Lower leg skin (tissue), 4 donors: ENCODE measurements at regions of chr1 and their contacts with region 1.

Region 1: GRCh38 chr1:232950197-232951176 is at the start of gene NTPCR:
- DNase-seq: peak; percentile 89 to 98
- H3K4me3 ChIP-seq: peak within 1 kb of the TSS; percentile 91
- CTCF ChIP-seq: no peak
- POLR2A ChIP-seq: no peak
- total RNA-seq, gene NTPCR: 17.8 to 28.5 (median 21.8) TPM

Region 2: DNA sequence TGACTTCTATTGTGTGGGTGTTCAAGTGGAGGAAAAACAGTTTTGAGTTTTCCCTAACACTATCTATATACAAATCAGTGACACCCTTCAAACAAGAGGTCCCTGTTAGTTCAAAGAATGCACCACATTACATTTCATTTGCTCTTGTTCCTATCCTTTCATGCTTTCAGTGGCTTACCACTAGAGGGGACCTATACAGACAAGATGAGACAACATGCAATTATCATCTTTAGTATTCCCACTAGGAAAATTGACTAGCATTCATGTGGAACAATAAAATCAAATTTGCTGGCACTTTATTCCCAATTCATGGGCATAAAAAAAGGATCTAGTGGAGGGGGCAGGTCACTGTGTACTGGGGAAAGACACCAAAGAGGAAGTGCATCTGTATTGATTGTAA is 307.2 kb before region 1 on chr1:
- intact Hi-C with region 1: loop called (anchors 10 kb)
- DNase-seq: no peak
- H3K4me3 ChIP-seq: no peak overlapping the region
- CTCF ChIP-seq: no peak
- POLR2A ChIP-seq: no peak